Esophagus muscularis mucosa (tissue), 4 donors: ENCODE measurements at regions of chr1 and their contacts with region 1.

Region 1: DNA sequence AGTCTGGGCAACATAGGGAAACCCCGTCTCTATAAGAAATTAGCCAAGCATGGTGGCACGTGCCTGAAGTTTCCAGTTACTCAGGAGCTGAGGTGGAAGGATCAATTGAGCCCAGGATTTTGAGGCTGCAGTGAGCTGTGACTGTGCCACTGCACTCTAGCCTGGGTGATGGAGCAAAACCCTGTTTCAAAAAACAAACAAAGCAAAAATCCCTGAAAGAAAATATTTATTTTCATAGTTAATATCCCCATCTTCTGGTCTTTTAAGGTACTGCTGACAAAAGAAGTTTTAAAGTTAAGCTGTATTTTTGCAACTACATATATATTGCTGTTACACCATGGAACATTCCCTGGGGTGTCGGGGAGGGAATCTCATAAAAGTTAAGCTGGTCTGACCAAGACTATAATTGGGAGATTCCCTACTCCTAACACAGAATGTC is 26.0 kb downstream of the VAMP4 start:
- DNase-seq: no peak
- H3K4me3 ChIP-seq: no peak overlapping the region
- H3K27ac ChIP-seq: peak overlapping the region; percentile 53 to 72 (median 62)
- H3K4me1 ChIP-seq: peaks cover 15 to 33% (median 29%) of the 10 kb centered on the region in 4 donors
- H3K27me3 ChIP-seq: no peaks in the 10 kb centered on the region
- CTCF ChIP-seq: peak; percentile 69 to 73 (median 72)
- EP300 ChIP-seq: no peak
- POLR2A ChIP-seq: no peak

Region 2: GRCh38 chr1:171644805-171645483 is 70.9 kb before region 1 on chr1:
- intact Hi-C with region 1: loop called (anchors 2 kb)
- DNase-seq: peak; percentile 93
- H3K4me3 ChIP-seq: peak overlapping the region; percentile 10 to 17 (median 12)
- H3K27ac ChIP-seq: peak overlapping the region; percentile 81 to 89 (median 84)
- H3K4me1 ChIP-seq: peaks cover 17 to 50% (median 35%) of the 10 kb centered on the region in 4 donors
- H3K27me3 ChIP-seq: no peaks in the 10 kb centered on the region
- CTCF ChIP-seq: peak; percentile 77 to 87 (median 86)
- EP300 ChIP-seq: no peak
- POLR2A ChIP-seq: no peak